Motor neuron (in vitro differentiated cells): ENCODE measurements at regions of chr17 and their contacts with region 1.

Region 1: DNA sequence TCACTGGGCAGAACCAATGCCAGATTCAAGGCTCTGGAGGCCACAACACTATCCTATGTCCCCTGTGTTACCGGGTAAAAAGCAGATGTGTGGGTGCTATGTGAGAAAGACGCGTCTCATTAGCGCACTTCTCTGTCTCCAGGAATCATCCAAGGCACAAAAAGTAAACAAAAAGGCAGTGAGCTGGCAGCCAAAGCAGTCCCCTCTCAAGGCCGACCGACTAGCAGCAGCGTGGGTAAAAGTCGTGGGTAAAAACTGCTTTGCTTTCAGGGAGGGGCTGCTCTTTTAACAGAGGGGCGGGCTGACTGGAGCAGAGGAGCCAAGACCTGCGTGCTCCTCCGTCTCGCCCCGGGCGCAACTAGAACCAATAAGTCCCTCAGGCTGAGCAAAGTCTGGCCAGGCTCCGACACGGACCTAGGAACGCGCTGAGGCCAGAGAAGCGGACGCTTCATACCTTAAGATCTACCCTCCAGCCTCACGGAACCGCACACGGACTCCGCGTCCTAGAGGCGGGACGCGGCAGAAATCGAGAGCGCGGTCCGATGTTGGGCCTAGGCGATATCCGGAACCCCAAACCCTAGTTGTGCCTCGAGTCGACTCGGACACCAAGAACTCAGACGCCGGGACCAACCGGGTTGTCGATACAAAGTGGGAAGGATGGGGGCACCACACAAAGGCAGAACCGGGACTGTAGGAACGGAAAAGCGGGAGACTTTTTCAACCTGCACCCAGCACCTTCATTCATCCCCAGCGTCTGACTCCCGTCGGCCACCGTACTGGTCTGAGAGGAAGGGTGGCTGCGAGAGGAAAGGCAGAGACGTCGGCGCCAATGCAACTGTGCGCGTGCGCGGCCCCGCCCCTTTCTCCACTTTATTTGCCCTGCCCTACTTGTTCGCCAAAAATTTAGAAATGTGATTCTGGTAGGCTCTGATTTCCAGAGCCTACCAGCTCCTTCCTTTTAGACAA is at the start of gene INTS2:
- ATAC-seq: peak; percentile 84 to 95 (median 88)
- H3K4me3 ChIP-seq: peak within 1 kb of the TSS; percentile 52 to 85 (median 60)
- H3K27ac ChIP-seq: peak within 1 kb of the TSS; percentile 40 to 74
- H3K4me1 ChIP-seq: peaks cover 7 to 10% of the 10 kb centered on the region in 2 donors
- total RNA-seq, gene INTS2: 11.2 to 16.8 (median 11.9) TPM

Region 2: DNA sequence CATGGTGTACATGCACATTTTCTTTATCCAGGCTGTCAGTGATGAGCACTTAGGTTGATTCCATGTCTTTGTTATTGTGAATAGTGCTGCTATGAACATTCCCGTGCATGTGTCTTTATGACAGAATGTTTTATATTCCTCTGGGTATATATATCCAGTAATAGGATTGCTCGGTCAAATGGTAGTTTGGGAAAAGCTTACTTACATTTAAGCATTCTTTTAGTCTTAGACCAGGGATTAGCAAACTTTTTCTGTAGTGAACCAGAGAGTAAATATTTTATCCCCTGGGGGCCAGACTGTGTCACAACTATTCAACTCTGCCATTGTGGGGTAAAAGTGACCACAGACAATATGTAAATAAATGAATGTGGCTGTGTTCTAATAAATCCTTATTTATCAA is 97.4 kb after region 1 on chr17:
- in situ Hi-C with region 1: loop called in 1 of 9 experiments (anchors 25 kb)
- ATAC-seq: no peak
- H3K4me3 ChIP-seq: no peak overlapping the region
- H3K27ac ChIP-seq: no peak overlapping the region
- H3K4me1 ChIP-seq: no peaks in the 10 kb centered on the region